ENCODE measurements at regions of chr2 and their contacts with region 1.

Region 1: GRCh38 chr2:239267288-239267951 is 133.4 kb downstream of the HDAC4 start:
- DNase-seq: peak in 1 of 2 experiments; percentile 13
- H3K4me3 ChIP-seq: no peak overlapping the region
- H3K27ac ChIP-seq: no peak overlapping the region
- H3K4me1 ChIP-seq: peaks cover 30% of the 10 kb centered on the region
- H3K27me3 ChIP-seq: no peaks in the 10 kb centered on the region
- CTCF ChIP-seq: no peak

Region 2: DNA sequence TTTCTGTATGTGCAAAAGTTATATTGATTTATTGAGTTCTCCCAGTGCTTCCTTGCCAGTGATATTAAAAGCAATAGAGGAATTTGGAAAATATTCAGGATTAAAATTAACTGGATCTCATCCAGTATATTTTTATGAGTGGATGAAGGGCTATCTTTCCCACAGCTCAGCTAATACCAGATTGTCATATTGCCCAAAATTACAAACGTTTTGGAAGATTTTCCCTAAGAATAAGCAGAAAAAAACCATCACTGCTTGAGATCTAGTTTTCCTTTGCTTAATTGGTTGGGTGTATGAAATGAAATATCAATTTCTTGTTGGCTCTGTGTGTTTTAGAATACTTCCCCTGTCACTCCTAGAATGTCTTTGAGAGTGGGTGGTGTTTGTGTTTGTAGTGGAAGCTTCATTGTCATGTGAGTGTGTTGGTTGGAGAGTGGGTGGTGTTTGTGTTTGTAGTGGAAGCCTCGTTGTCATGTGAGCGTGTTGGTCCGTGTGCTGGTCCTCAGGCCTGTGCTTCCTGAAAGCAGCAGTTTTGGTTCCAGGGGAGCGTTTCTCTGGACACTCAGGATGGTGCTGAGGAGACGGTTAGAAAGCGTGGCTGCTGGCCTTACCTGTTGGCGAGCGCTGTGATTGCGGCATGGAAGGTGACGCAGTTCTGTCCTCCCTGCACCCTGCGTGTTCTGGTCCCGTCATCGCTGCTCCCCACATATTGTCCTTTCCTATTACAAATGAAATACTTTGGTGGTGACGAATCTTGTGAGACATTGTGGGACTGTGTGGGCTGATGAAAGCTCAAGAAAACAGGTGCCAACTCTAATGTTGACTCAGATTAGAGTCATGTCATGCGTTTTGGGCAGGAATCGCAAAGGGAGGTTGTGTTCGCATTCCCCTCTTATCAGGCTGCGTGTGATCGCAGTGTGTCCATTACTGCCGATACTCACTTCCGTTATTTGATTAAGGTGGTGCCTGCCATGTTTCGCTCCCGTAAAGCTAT is 828.3 kb before region 1 on chr2:
- CTCF ChIA-PET with region 1: no interaction called
- POLR2A ChIA-PET with region 1: no interaction called
- intact Hi-C with region 1: loop called (anchors 5 kb)
- DNase-seq: peak; percentile 86 to 89
- H3K4me3 ChIP-seq: no peak overlapping the region
- H3K27ac ChIP-seq: peak overlapping the region; percentile 81
- H3K4me1 ChIP-seq: peaks cover 13% of the 10 kb centered on the region
- H3K27me3 ChIP-seq: no peaks in the 10 kb centered on the region
- CTCF ChIP-seq: no peak

Measured in PC-9 (cell line).